ENCODE measurements at regions of chr5 and their contacts with region 1.

Region 1: DNA sequence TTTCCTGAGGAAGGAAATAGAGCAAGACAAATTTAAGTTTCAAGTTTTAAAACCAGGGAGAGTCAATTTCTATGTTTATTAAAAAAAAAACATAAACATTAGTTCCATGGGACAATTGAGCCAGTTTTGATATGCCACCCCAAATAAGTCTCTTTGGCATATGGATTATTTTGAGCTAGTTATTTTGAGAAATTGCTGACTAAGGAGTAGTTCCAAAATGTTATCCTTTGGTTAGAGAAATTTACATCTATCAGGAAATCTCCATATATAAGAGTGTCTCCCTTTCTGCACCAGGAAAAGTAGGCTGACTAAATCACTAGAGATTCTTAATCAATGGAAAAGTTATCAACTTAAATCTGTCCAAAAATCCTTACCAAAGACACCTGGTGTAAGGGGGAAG is 105.8 kb downstream of the HAPLN1 start:
- DNase-seq: no peak
- H3K4me3 ChIP-seq: no peak overlapping the region
- H3K27ac ChIP-seq: no peak overlapping the region
- H3K4me1 ChIP-seq: no peaks in the 10 kb centered on the region
- H3K27me3 ChIP-seq: no peaks in the 10 kb centered on the region
- CTCF ChIP-seq: no peak

Region 2: DNA sequence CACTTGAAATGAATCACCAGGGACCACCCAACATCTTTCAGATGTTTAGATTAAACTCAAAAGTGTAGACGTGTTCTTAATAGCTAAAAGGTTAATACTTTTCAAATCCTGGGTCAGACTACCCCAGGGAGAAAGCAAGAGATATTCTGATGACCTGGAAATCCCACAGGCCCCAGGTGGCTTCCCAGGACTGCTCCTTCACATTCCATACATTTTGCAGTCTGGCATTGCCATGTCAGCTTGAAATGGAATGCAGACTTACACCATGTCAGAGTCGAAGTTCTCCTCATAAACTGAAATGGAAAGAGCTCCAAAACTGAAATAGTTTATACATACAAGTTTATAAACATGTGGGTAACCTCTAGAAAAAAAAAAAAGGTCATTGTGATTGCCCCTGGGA is 599.2 kb before region 1 on chr5:
- CTCF ChIA-PET with region 1: no interaction called
- POLR2A ChIA-PET with region 1: no interaction called
- intact Hi-C with region 1: no loop called
- DNase-seq: no peak
- H3K4me3 ChIP-seq: no peak overlapping the region
- H3K27ac ChIP-seq: no peak overlapping the region
- H3K4me1 ChIP-seq: no peaks in the 10 kb centered on the region
- H3K27me3 ChIP-seq: no peaks in the 10 kb centered on the region
- CTCF ChIP-seq: no peak

Region 3: DNA sequence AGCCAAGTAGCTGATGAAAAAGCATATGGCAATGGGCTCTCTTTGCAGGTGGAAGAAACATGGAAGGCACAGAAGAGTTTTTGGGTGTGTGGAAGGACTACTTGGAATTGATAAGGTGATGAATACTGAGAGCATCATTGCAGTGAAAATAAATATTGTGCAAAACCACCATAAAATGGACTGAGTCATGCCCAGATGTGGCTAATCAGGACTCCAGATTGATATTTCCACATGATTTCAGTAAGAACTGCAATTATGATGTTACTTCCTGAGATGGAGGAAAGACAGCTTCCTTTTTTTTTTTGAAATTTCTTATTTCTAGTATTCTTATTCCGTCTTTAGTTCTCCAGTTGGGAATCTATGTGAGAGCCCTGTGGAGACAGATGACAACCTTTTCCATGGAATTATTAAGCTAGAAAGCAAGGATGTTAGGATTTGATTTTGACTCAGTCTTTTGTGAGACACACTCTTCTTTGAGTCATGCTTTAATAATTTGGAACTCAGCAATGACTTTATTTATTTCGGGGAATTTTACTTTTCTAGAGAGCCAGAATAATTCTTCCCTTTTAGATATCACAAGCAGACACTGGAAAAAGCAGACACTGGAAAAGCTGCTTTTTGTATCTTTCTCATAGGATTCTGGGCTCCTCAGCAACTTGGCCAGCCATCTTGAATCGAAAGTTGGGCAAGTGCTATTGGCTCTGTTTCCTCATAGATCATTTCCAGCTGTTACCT is 237.5 kb before region 1 on chr5:
- CTCF ChIA-PET with region 1: no interaction called
- POLR2A ChIA-PET with region 1: no interaction called
- intact Hi-C with region 1: no loop called
- DNase-seq: no peak
- H3K4me3 ChIP-seq: no peak overlapping the region
- H3K27ac ChIP-seq: no peak overlapping the region
- H3K4me1 ChIP-seq: no peaks in the 10 kb centered on the region
- H3K27me3 ChIP-seq: no peaks in the 10 kb centered on the region
- CTCF ChIP-seq: no peak

Region 4: DNA sequence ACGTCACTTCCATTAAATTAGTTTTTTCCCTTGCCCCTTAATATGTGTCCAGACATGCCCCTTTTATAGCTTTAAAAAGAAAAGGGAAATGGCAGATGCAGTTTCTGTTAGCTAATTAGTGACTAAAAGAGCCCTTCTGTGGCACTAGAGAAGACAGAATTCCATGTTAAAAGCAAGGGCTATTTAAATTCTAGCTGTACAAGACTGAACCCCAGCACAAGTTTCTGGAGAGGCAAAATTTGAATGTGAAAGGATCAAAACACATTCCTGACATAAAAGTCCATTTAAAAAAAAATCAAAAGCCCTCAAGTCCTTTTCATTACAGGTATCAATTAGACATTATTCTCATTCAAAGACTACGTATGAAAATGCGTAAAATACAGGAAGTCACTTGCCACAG is 27.1 kb after region 1 on chr5:
- CTCF ChIA-PET with region 1: no interaction called
- POLR2A ChIA-PET with region 1: interaction called, 17 read pairs
- intact Hi-C with region 1: no loop called
- DNase-seq: no peak
- H3K4me3 ChIP-seq: no peak overlapping the region
- H3K27ac ChIP-seq: no peak overlapping the region
- H3K4me1 ChIP-seq: no peaks in the 10 kb centered on the region
- H3K27me3 ChIP-seq: no peaks in the 10 kb centered on the region
- CTCF ChIP-seq: no peak